Activated CD4-positive, alpha-beta T cell treated with anti-CD3 and anti-CD28 coated beads for 36 hours (primary cell): ENCODE measurements at regions of chr5 and their contacts with region 1.

Region 1: DNA sequence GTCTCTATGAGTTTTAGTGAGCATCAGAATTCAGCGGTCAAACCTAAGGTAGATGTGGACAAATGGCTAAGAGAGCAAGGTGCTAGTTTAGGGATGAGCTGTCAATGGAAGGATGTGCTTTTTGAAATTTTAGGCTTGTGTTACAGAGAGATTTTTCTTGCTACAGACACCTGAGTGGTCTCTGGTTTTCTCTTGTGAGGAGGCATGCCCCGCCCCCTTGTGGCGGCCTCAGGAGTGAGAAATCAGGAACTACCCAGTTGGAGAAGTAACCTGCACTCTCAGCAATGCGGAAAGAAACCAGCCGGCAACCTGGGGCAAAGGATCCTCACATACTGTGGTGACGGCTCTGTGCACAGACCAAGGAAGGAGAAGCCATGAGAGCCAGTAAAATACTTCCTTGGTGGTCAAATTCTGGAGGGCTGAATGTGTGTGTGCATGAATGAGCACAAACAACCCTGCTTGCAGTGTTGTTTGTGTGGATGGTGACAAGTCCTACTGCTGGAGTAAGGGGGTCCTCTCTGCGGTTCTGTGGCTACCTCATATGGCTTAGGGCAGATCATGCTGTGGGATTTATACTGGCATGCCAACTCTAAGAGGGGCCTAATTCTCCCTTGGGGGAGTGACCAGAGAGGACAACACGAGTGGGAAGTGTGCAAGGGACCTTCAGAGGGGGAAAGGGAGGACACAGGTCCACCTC is 16.7 kb upstream of the HSD17B4 start:
- DNase-seq: peak; percentile 86
- ATAC-seq: peak; percentile 83
- H3K4me3 Mint-ChIP-seq: no peak overlapping the region
- H3K27ac Mint-ChIP-seq: no peak overlapping the region
- H3K4me1 Mint-ChIP-seq: peaks cover 8% of the 10 kb centered on the region
- H3K27me3 Mint-ChIP-seq: peaks cover 21% of the 10 kb centered on the region

Region 2: DNA sequence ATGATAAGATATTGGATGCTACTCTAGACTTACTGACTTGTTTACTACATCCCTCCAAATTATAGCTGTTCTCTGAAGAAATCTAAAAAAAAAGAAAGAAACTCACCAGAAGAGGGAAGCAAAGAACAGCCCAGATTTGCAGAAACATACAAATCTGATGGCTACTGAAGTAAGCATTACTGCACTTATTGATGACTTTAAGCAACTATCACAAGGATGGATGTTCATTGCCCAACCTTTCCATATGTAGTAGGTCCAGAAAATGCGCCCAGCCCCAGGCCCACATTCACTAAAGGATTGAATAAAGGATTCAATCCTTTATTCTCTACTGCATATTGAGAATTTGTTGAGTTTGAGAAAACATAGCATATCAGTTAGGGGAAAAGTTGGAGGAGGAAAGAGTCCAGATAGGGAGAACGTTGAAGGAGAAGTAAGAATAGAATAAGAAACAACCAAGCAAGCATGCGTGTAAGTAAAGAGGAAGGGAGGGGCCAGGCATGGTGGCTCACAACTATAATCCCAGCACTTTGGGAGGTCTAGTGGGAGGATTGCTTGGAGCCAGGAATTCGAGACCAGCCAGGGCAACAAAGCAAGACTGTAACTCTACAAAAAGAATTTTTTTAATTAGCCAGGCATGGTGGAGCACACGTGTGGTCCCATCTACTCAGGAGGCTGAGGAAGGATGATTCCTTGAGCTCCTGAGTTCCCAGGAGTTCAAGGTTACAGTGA is 413.4 kb before region 1 on chr5:
- CTCF ChIA-PET with region 1: interaction called, 7 read pairs
- POLR2A ChIA-PET with region 1: no interaction called
- intact Hi-C with region 1: loop called (anchors 1 kb)
- DNase-seq: no peak
- ATAC-seq: peak; percentile 70
- H3K4me3 Mint-ChIP-seq: no peak overlapping the region
- H3K27ac Mint-ChIP-seq: no peak overlapping the region
- H3K4me1 Mint-ChIP-seq: peaks cover 2% of the 10 kb centered on the region
- H3K27me3 Mint-ChIP-seq: no peaks in the 10 kb centered on the region